ENCODE measurements at regions of chr5 and their contacts with region 1.

Region 1: DNA sequence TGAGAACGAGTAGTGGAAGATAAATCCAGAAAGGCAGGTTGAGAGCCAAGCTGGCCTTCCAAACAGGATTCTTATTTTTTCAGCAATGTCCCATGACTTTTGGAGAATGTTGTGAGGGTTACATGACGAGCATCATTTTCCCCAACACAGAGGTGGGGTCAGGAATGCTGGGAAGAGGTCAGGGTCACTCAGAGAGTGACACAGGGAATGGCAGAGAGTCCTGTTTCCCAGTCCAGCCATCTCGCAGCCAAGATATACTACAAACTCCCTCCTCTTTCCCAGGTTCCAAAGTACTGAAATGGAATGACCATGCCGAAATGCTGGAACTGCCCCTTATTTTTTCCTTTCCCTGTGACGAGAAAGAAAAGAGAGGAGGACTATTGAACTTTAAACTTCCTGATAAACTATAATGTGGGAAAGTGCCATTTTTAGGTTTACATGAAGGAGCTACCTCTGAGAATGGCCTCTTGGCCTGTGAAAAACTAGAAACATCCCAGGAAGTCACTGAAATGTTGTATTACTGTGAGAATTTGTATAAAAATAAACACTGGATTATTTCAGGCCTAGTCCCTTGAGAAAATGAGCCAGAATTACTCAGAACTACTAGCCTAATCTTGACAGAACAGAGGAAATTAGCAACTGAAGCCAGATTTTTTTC is 420.4 kb downstream of the CETN3 start:
- DNase-seq: peak in 1 of 2 donors; percentile 76
- H3K4me3 ChIP-seq: no peak overlapping the region
- H3K27ac ChIP-seq: peak overlapping the region; percentile 84 to 90
- H3K4me1 ChIP-seq: peaks cover 0 to 16% of the 10 kb centered on the region in 2 donors
- H3K27me3 ChIP-seq: no peaks in the 10 kb centered on the region
- CTCF ChIP-seq: no peak

Region 2: GRCh38 chr5:90015584-90016018 is 26.5 kb after region 1 on chr5:
- intact Hi-C with region 1: loop called (anchors 2 kb)
- DNase-seq: no peak
- H3K4me3 ChIP-seq: no peak overlapping the region
- H3K27ac ChIP-seq: peak overlapping the region; percentile 36 to 56
- H3K4me1 ChIP-seq: peaks cover 0 to 10% of the 10 kb centered on the region in 2 donors
- H3K27me3 ChIP-seq: no peaks in the 10 kb centered on the region
- CTCF ChIP-seq: no peak

Region 3: GRCh38 chr5:90020575-90021539 is 31.7 kb after region 1 on chr5:
- intact Hi-C with region 1: loop called (anchors 1 kb)
- DNase-seq: no peak
- H3K4me3 ChIP-seq: peak overlapping the region; percentile 51
- H3K27ac ChIP-seq: peak overlapping the region; percentile 39 to 62
- H3K4me1 ChIP-seq: peaks cover 0 to 11% of the 10 kb centered on the region in 2 donors
- H3K27me3 ChIP-seq: no peaks in the 10 kb centered on the region
- CTCF ChIP-seq: no peak

Region 4: GRCh38 chr5:90264689-90265544 is 275.8 kb after region 1 on chr5:
- intact Hi-C with region 1: loop called (anchors 10 kb)
- DNase-seq: peak in 1 of 2 donors; percentile 71
- H3K4me3 ChIP-seq: peak overlapping the region in 1 of 2 donors; percentile 29
- H3K27ac ChIP-seq: no peak overlapping the region
- H3K4me1 ChIP-seq: peaks cover 0 to 12% of the 10 kb centered on the region in 2 donors
- H3K27me3 ChIP-seq: no peaks in the 10 kb centered on the region
- CTCF ChIP-seq: peak; percentile 75 to 94 (median 92)

Measured in ascending aorta (tissue), 2 donors.